ENCODE measurements at regions of chr5 and their contacts with region 1.

Region 1: GRCh38 chr5:80711938-80712337 is 57.2 kb upstream of the DHFR start:
- DNase-seq: peak; percentile 10
- H3K4me3 ChIP-seq: no peak overlapping the region
- H3K27ac ChIP-seq: no peak overlapping the region
- H3K4me1 ChIP-seq: no peaks in the 10 kb centered on the region
- H3K27me3 ChIP-seq: no peaks in the 10 kb centered on the region
- CTCF ChIP-seq: peak; percentile 38 to 57

Region 2: GRCh38 chr5:79456890-79457583 is 1254.9 kb before region 1 on chr5:
- CTCF ChIA-PET with region 1: no interaction called
- dilution Hi-C with region 1: no loop called
- in situ Hi-C with region 1: no loop called
- intact Hi-C with region 1: no loop called
- DNase-seq: no peak
- H3K4me3 ChIP-seq: no peak overlapping the region
- H3K27ac ChIP-seq: no peak overlapping the region
- H3K4me1 ChIP-seq: no peaks in the 10 kb centered on the region
- H3K27me3 ChIP-seq: no peaks in the 10 kb centered on the region
- CTCF ChIP-seq: no peak

Region 3: DNA sequence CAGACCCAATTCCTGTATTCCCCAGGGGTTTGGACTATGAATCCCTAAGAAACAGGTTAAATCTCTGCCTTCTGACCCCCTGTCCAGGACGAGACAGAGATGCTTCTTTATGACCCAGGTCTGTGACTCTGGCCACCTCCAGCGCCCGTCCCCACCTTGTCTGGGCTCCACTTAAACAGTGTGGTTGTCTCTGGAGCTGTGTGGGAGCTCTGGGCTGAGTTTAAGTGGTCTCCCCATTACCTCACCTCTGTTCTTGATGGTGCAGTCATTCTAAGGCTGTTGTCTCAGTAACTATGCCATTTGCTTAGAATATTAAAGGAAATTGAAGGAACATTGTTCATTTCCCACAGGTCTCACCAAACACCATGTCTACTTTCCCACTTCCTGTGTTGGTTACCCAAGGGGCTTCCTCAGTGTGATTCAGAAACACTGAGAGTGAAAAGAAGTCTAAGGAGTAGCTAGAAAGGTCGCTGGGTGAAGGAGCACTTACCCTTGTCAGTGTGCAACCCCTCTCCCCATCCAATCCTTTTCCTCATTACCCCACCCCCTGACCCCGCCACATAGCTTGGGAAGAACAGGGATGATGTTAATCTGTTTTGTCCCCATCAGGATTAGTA is 393.4 kb after region 1 on chr5:
- CTCF ChIA-PET with region 1: no interaction called
- dilution Hi-C with region 1: no loop called
- in situ Hi-C with region 1: no loop called
- intact Hi-C with region 1: loop called (anchors 1 kb)
- DNase-seq: no peak
- H3K4me3 ChIP-seq: no peak overlapping the region
- H3K27ac ChIP-seq: no peak overlapping the region
- H3K4me1 ChIP-seq: no peaks in the 10 kb centered on the region
- H3K27me3 ChIP-seq: peaks cover 3% of the 10 kb centered on the region
- CTCF ChIP-seq: no peak

Region 4: DNA sequence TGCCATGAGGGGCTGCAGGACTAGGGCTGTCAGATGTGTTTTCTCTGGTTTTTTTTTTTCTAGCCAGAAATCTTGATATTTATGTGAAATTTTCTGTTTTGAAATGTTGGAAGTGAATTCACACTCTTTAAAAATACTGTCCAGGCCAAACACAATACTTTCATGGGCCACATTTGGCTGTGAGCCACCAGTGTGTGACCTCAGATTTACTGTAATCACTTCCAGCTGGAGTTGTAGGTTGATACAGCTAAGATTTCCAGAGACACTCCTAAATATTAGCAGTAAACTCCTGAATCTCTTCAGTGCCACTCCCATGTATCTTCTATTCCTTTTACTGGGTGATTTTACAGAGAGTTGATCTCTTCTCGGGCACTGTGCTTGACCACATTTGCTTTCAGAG is 429.0 kb after region 1 on chr5:
- CTCF ChIA-PET with region 1: interaction called, 13 read pairs
- dilution Hi-C with region 1: no loop called
- in situ Hi-C with region 1: no loop called
- intact Hi-C with region 1: no loop called
- DNase-seq: no peak
- H3K4me3 ChIP-seq: no peak overlapping the region
- H3K27ac ChIP-seq: no peak overlapping the region
- H3K4me1 ChIP-seq: no peaks in the 10 kb centered on the region
- H3K27me3 ChIP-seq: peaks cover 8% of the 10 kb centered on the region
- CTCF ChIP-seq: no peak

Region 5: GRCh38 chr5:81194633-81195333 is 482.8 kb after region 1 on chr5:
- CTCF ChIA-PET with region 1: no interaction called
- dilution Hi-C with region 1: no loop called
- in situ Hi-C with region 1: no loop called
- intact Hi-C with region 1: loop called (anchors 1 kb)
- DNase-seq: peak; percentile 56
- H3K4me3 ChIP-seq: peak overlapping the region in 2 of 3 experiments; percentile 8 to 21
- H3K27ac ChIP-seq: no peak overlapping the region
- H3K4me1 ChIP-seq: no peaks in the 10 kb centered on the region
- H3K27me3 ChIP-seq: peaks cover 2% of the 10 kb centered on the region
- CTCF ChIP-seq: peak; percentile 78 to 96